ENCODE measurements at regions of chr11 and their contacts with region 1.

Region 1: DNA sequence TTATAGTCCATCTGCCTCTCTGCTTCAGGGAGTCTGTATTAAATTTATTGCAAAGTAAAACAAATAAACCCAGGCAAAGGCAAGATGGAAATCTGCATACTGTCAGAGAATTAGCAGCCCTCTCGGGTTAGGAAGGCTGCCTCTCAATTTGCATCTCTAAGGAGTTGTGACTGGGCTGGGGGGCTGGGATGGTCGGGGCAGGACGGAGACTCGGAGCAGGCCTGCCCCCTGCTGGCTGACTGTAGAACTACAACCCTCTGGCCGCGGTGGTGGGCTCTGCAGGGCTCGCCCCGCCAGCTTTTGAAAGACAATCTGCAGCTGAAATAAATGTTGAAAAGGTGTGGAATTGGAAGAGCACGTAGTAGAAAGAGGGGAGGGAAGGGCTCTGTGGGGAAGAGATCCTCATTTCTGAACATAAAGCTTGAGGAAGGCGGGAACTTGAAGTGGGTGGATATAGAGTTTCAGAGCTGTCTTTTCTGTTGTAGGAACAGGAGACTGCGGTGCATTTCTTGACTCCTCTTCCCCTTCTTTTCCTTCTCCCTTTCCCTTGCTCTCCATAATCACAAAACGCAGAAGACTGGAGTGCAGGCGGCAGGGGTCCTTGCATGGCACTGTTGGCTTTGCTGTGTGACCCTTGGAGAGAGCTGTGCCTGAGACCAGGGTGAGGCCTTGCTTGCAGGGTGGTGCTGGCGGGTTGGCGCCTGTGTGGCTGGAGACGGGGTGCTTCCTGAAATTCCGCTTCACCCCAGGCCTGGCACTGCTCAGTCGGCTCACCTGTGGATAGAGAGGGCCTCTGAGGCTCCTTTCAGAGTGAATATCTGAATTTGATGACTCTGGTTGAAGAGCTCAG is 22.6 kb upstream of the PKNOX2 start:
- DNase-seq: no peak
- H3K4me3 ChIP-seq: no peak overlapping the region
- CTCF ChIP-seq: peak; percentile 92

Region 2: DNA sequence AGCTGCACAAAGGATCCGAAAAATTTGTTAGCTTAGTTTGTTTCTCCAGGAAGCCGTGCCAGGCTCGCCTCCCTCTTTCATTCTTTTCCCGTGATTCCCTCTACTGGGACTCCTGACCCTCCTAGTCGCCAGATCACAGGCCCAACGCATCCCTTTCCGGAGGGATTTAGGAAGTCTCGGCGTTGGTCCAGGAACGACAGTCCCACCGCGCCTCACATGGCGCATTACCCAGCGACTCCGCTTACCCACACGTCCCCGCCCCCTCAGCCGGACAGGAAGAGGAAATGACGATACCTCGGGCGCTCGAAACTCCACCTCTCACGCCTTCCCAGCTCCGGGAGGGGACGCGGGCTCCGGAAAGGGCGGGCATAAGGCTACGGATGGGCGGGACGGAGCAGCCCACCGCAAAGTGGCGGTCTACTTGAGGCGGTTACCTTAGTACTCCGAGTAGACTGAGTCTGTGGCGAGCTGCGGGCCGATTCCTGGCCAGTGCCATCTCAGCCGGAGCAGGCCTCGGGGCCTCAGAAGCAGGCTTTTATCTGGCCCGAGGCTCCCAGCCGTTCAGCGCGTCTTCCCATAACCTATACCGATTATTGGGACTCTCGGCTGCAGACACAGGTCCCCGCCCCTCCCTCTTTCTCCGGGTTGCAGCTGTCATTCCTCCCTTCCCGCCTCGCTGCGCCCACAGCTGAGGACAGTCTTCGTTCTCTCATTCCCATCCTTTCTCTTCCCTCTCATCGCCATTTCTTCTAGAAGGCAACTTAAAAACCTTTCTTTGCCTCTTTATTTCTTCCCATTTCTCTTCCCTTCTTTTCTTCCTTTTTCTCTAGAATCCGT is 187.9 kb before region 1 on chr11 and contains the start of gene CCDC15:
- CTCF ChIA-PET with region 1: interaction called, 43 read pairs
- POLR2A ChIA-PET with region 1: no interaction called
- DNase-seq: peak; percentile 71
- H3K4me3 ChIP-seq: peak within 1 kb of the TSS; percentile 78
- CTCF ChIP-seq: no peak

Region 3: GRCh38 chr11:124970925-124971324 is 171.0 kb before region 1 on chr11:
- CTCF ChIA-PET with region 1: interaction called, 15 read pairs
- POLR2A ChIA-PET with region 1: no interaction called
- DNase-seq: no peak
- H3K4me3 ChIP-seq: no peak overlapping the region
- CTCF ChIP-seq: no peak

Region 4: DNA sequence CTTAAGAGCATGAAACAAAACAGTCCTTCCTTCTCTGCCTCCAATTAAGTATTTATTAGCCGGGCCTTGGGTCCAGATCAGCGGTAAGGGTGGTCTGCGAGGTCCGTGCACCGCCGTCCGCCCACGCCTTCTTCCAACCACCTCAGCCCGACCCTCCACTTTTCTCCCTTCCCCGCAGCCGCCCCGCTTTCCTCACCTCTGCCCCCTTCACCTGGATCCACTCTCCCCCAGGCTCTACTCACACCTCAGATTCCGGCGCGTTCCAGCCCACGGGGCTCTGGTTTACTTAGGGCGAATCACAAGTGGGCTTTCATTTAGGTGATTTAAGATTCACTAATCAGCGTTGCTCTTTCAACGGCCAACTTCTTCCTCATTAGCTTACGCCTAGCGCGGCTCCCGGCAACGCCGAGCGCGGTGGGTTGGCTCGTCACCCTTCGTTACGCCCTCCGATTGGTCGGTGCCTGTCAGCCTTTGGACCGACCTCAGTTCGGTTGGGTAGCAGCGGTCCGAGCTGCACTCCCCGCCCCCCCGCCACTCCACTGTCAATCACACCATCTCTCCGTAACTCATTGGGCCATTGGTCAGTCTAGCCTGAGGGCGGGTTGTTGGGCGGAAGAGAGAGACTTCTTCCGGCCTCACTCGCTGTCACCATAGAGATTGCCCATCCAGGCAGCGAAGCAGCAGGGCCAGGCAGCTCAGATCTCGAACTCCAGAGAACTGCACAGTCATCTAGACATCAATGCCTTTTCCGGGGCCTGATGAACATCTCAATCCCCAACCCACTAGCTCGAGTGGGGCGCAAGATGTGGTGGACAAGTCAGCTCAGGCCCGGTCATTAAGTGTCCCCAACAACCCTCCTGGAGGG is 30.3 kb before region 1 on chr11 and contains the start of gene TMEM218:
- CTCF ChIA-PET with region 1: interaction called, 39 read pairs
- POLR2A ChIA-PET with region 1: no interaction called
- DNase-seq: peak; percentile 94
- H3K4me3 ChIP-seq: peak within 1 kb of the TSS; percentile 87
- CTCF ChIP-seq: no peak

Region 5: GRCh38 chr11:125154378-125155099 is 12.6 kb after region 1 on chr11:
- CTCF ChIA-PET with region 1: interaction called, 63 read pairs
- POLR2A ChIA-PET with region 1: no interaction called
- DNase-seq: no peak
- H3K4me3 ChIP-seq: no peak overlapping the region
- CTCF ChIP-seq: no peak

Region 6: DNA sequence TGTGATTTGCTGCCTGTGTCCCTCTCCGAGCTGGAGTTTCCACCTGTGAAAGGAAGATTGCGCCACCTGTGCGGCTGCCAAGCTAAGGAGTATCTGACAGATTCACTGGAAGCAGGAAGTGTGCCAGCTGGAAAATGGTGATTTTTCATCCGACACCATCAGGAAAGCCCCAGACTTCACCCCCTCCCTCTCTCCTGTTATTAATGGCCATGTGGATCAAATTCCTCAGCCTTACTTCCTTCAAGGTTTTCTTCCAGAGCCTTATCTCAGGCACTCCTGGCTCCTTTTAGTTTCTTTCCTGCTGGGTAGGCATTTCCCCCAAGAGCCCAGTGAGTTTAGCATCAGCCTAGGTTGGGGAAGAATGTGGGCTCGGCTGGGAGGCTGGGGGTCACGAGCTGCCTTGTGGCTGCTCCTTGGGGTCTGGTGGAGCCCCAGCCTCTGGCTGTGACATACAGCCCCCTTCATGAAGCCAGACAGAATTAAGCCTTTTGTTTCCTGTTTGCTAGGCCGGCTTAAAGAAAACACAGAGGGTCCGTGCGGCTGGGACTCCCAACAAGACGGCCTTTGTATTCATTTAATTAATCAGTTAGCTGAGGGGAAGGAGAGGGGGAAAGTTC is 59.7 kb after region 1 on chr11:
- CTCF ChIA-PET with region 1: no interaction called
- POLR2A ChIA-PET with region 1: no interaction called
- DNase-seq: no peak
- H3K4me3 ChIP-seq: no peak overlapping the region
- CTCF ChIP-seq: no peak

Region 7: GRCh38 chr11:125214571-125215565 is 73.0 kb after region 1 on chr11:
- CTCF ChIA-PET with region 1: no interaction called
- POLR2A ChIA-PET with region 1: no interaction called
- DNase-seq: no peak
- H3K4me3 ChIP-seq: no peak overlapping the region
- CTCF ChIP-seq: no peak